ENCODE measurements at regions of chr1 and their contacts with region 1.

Region 1: GRCh38 chr1:220733090-220733601 is 15.0 kb upstream of the MTARC2 start:
- DNase-seq: peak; percentile 71 to 74
- H3K4me3 ChIP-seq: no peak overlapping the region
- H3K27ac ChIP-seq: no peak overlapping the region
- H3K4me1 ChIP-seq: peaks cover 20% of the 10 kb centered on the region
- H3K27me3 ChIP-seq: no peaks in the 10 kb centered on the region
- CTCF ChIP-seq: peak; percentile 89

Region 2: GRCh38 chr1:219963432-219963831 is 769.7 kb before region 1 on chr1:
- CTCF ChIA-PET with region 1: no interaction called
- POLR2A ChIA-PET with region 1: no interaction called
- intact Hi-C with region 1: no loop called
- DNase-seq: no peak
- H3K4me3 ChIP-seq: no peak overlapping the region
- H3K27ac ChIP-seq: no peak overlapping the region
- H3K4me1 ChIP-seq: no peaks in the 10 kb centered on the region
- H3K27me3 ChIP-seq: no peaks in the 10 kb centered on the region
- CTCF ChIP-seq: no peak

Region 3: DNA sequence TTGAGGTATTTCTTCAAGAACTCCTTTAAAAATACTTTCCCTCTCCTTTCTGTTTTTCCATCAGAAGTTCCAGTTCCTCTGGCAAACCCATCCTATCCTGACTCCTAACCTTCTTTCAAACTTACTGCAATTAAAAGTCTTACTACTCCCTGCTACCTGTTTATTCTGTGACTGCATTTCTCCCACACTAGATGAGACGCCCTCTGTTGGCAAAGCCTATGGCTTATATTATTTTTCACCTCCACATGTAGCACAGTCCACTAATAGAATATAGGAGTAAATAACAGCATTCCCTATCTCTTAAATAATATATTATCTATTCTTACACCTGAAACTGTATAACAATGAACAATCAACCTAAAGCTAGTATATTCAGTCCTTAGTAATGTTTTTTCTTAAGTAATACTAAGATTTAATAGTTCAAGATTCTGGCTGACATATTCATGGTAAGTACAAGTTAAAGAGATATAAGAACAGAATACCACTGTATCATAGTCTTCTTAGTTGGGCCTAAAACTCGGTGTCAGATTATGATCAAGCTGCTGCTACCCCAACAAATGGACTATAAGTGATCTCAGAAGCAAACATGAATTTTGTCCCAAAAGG is 515.7 kb before region 1 on chr1:
- CTCF ChIA-PET with region 1: interaction called, 17 read pairs
- POLR2A ChIA-PET with region 1: no interaction called
- intact Hi-C with region 1: no loop called
- DNase-seq: peak in 1 of 2 experiments; percentile 5
- H3K4me3 ChIP-seq: no peak overlapping the region
- H3K27ac ChIP-seq: no peak overlapping the region
- H3K4me1 ChIP-seq: no peaks in the 10 kb centered on the region
- H3K27me3 ChIP-seq: no peaks in the 10 kb centered on the region
- CTCF ChIP-seq: peak; percentile 56

Region 4: GRCh38 chr1:220300442-220301121 is 432.6 kb before region 1 on chr1:
- CTCF ChIA-PET with region 1: interaction called, 13 read pairs
- POLR2A ChIA-PET with region 1: no interaction called
- intact Hi-C with region 1: loop called (anchors 1 kb)
- DNase-seq: peak; percentile 59 to 60
- H3K4me3 ChIP-seq: no peak overlapping the region
- H3K27ac ChIP-seq: peak overlapping the region; percentile 38
- H3K4me1 ChIP-seq: peaks cover 11% of the 10 kb centered on the region
- H3K27me3 ChIP-seq: no peaks in the 10 kb centered on the region
- CTCF ChIP-seq: no peak

Region 5: DNA sequence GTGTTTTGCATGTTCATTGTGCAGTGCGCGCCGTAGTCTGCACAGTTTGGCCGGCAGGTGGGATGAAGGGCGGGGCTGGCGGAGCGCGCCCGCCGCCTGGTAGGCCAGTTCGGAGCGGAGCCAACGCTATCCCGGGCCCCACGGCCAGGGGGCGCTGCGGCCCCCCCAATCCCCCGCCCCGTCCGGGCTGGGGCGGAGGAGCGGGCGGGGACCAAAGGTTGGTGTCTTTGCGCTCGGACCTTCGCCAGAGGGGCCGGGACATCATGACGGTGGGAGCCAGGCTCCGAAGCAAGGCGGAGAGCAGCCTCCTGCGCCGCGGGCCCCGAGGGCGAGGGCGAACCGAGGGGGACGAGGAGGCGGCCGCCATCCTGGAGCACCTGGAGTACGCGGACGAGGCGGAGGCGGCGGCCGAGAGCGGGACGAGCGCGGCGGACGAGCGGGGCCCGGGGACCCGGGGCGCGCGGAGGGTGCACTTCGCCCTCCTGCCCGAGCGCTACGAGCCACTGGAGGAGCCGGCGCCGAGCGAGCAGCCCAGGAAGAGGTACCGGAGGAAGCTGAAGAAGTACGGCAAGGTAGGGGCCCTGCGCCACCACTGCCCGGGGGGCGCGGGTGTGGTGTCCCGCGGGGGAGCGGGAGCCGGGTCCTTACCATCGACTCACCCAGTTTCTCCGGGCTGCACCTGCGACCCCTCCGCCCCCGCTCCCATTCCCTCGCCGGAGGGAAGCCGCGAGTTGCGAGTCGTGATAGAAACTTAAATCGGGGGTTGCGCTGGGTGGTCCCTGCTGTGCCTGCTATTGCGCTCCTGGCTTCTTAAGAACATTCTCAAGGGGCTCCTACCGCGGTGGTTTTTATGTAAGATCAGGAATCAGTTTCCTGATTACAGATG is 42.8 kb before region 1 on chr1 and contains the start of gene C1orf115:
- CTCF ChIA-PET with region 1: interaction called, 5 read pairs
- POLR2A ChIA-PET with region 1: no interaction called
- intact Hi-C with region 1: loop called (anchors 2 kb)
- DNase-seq: peak; percentile 55 to 90
- H3K4me3 ChIP-seq: peak within 1 kb of the TSS; percentile 77
- H3K27ac ChIP-seq: no peak within 1 kb of the TSS
- H3K4me1 ChIP-seq: no peaks in the 10 kb centered on the region
- H3K27me3 ChIP-seq: no peaks in the 10 kb centered on the region
- CTCF ChIP-seq: peak; percentile 98
- total RNA-seq, gene C1orf115: 5.6 and 6.5 TPM in 2 replicates

Region 6: GRCh38 chr1:220767312-220768125 is 34.4 kb after region 1 on chr1:
- CTCF ChIA-PET with region 1: no interaction called
- POLR2A ChIA-PET with region 1: no interaction called
- intact Hi-C with region 1: no loop called
- DNase-seq: no peak
- H3K4me3 ChIP-seq: no peak overlapping the region
- H3K27ac ChIP-seq: no peak overlapping the region
- H3K4me1 ChIP-seq: no peaks in the 10 kb centered on the region
- H3K27me3 ChIP-seq: no peaks in the 10 kb centered on the region
- CTCF ChIP-seq: no peak

Measured in PC-9 (cell line).